A549 (cell line): ENCODE measurements at regions of chr10 and their contacts with region 1.

Region 1: GRCh38 chr10:72364239-72364777 is 9.6 kb upstream of the DNAJB12 start:
- DNase-seq: peak; percentile 84 to 93
- ATAC-seq: peak; percentile 95 to 96
- H3K4me3 ChIP-seq: peak overlapping the region; percentile 11; the same call in 1 of the 3 replicates
- H3K27ac ChIP-seq: peak overlapping the region; percentile 63 to 91
- H3K4me1 ChIP-seq: peaks cover 18% of the 10 kb centered on the region
- CTCF ChIP-seq: peak; percentile 94
- EP300 ChIP-seq: 0 out of 5 replicates have a peak, but pooled peaks of 1 of the 2 experiments have one; percentile 1
- POLR2A ChIP-seq: peak; percentile 31; the same call in 1 of the 2 replicates
- RAD21 ChIP-seq: peak; percentile 97 to 98

Region 2: DNA sequence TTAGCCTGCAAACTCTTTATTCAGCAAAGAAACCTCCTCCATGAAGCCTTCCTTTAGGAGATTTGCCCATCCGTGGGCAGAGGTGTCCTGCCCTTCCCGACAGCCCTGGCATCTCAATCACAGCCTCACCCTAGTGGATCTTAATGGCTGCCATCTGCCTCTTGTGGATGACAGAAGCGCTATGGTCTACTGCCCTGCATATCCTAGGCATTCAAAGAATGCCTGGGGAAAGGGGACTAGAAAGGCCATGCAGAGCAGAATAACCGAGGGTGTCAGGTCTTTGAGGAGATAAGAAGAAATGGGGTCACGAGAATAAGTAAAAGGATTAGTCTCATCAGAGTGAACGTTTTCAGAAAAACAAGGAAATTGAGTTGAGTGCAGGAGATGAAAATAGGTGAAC is 218.2 kb before region 1 on chr10:
- CTCF ChIA-PET with region 1: no interaction called
- POLR2A ChIA-PET with region 1: no interaction called
- DNase-seq: no peak
- ATAC-seq: peak in 1 of 2 experiments; percentile 56; a peak in 3 of 6 replicates
- H3K4me3 ChIP-seq: no peak overlapping the region
- H3K27ac ChIP-seq: no peak overlapping the region
- H3K4me1 ChIP-seq: peaks cover 9% of the 10 kb centered on the region
- CTCF ChIP-seq: no peak
- EP300 ChIP-seq: no peak
- POLR2A ChIP-seq: no peak
- RAD21 ChIP-seq: no peak

Region 3: GRCh38 chr10:72375585-72375984 is 11.3 kb after region 1 on chr10:
- CTCF ChIA-PET with region 1: interaction called, 41 read pairs
- POLR2A ChIA-PET with region 1: interaction called, 3 read pairs
- DNase-seq: peak in 1 of 2 experiments; percentile 40
- ATAC-seq: peak; percentile 74 to 90
- H3K4me3 ChIP-seq: no peak overlapping the region
- H3K27ac ChIP-seq: no peak overlapping the region
- H3K4me1 ChIP-seq: no peaks in the 10 kb centered on the region
- CTCF ChIP-seq: 0 out of 3 replicates have a peak, but pooled peaks have one; percentile 17
- EP300 ChIP-seq: no peak
- POLR2A ChIP-seq: no peak
- RAD21 ChIP-seq: peak in 1 of 2 experiments; percentile 49; a peak in 3 of 5 replicates

Region 4: DNA sequence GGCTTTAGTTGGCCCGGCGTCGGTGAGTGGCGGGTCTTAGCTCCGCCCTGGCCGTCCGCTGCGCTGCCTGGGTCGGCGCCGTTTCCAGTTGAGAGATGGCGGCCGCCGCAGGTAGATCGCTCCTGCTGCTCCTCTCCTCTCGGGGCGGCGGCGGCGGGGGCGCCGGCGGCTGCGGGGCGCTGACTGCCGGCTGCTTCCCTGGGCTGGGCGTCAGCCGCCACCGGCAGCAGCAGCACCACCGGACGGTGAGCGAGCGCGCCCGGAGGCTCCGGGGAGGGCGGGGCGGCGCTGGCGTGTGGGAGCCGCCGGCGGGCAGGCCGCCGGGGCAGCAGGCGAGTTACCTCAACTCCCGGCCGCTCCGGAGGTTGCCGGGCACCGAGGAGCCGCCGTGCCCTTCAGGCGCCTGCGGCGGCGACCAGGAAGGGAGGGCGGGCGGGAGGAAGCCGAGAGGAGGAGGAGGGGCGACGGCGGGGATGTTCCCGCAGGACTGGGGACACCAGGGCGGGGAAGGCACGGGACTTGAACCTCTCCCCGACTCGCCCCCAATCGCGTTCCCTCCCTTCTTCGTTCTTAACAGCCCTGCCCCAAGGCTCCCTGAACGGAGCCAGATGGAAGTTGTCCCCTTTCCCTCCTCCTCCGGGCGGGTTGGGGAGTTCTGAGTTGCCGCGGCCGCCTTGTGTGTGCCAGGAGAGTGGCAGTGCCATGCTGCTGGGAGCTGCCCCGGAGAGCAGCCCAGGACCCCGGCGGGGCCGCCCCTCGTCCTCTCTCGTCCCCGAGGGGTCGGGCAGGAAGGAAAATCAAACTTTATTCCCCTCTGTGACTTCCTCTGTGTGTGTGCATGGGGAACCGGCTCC is 328.0 kb after region 1 on chr10 and contains the start of gene MCU:
- CTCF ChIA-PET with region 1: interaction called, 11 read pairs
- POLR2A ChIA-PET with region 1: interaction called, 11 read pairs
- DNase-seq: peak; percentile 32 to 97
- ATAC-seq: peak; percentile 39 to 61
- H3K4me3 ChIP-seq: peak within 1 kb of the TSS; percentile 80
- H3K27ac ChIP-seq: peak within 1 kb of the TSS; percentile 96 to 99
- H3K4me1 ChIP-seq: peaks cover 72% of the 10 kb centered on the region
- CTCF ChIP-seq: no peak
- EP300 ChIP-seq: no peak
- POLR2A ChIP-seq: peak; percentile 78
- RAD21 ChIP-seq: no peak; a peak in 1 of 5 replicates
- polyA plus RNA-seq, gene MCU: 221 and 226 TPM in 2 replicates

Region 5: DNA sequence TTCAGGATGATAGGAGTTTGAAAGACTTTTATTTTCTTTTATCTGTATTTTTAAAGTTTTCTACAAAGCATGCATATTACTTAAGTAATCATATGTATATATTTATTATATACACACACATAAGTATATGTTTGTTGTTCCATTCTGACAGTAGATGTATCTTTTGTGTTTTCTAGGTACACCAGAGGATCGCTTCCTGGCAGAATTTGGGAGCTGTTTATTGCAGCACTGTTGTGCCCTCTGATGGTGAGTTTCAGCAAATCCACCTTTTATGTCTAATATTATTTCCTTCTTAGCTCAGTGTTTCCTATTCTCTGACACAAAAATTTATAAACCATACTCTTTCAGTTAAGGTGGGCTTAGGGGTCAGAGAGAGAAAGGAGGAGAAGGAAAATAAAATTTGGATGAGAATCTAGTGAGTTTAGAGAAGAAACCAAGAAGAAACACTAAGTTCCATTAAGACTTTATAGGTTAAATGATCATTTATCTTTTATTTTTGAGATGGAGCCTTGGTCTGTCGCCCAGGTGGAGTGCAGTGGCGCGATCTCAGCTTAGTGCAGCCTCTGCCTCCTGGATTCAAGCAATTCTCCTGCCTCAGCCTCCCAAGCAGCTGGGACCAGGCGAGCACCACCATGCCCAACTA is 470.0 kb after region 1 on chr10:
- CTCF ChIA-PET with region 1: interaction called, 89 read pairs
- POLR2A ChIA-PET with region 1: interaction called, 3 read pairs
- DNase-seq: peak; percentile 29 to 76
- ATAC-seq: peak; percentile 68 to 81; a peak in 4 of 6 replicates
- H3K4me3 ChIP-seq: no peak overlapping the region
- H3K27ac ChIP-seq: no peak overlapping the region
- H3K4me1 ChIP-seq: peaks cover 46% of the 10 kb centered on the region
- CTCF ChIP-seq: peak; percentile 91
- EP300 ChIP-seq: no peak
- POLR2A ChIP-seq: no peak
- RAD21 ChIP-seq: peak; percentile 94

Region 6: GRCh38 chr10:72875250-72876055 is 511.1 kb after region 1 on chr10:
- CTCF ChIA-PET with region 1: interaction called, 29 read pairs
- POLR2A ChIA-PET with region 1: no interaction called
- DNase-seq: peak; percentile 31 to 49
- ATAC-seq: peak; percentile 50 to 58; a peak in 3 of 6 replicates
- H3K4me3 ChIP-seq: no peak overlapping the region
- H3K27ac ChIP-seq: no peak overlapping the region
- H3K4me1 ChIP-seq: no peaks in the 10 kb centered on the region
- CTCF ChIP-seq: peak; percentile 75
- EP300 ChIP-seq: no peak
- POLR2A ChIP-seq: no peak
- RAD21 ChIP-seq: peak; percentile 75 to 81

Region 7: GRCh38 chr10:73060738-73061635 is 696.7 kb after region 1 on chr10:
- CTCF ChIA-PET with region 1: interaction called, 15 read pairs
- POLR2A ChIA-PET with region 1: no interaction called
- DNase-seq: peak; percentile 47 to 50
- ATAC-seq: peak; percentile 74 to 86; a peak in 5 of 6 replicates
- H3K4me3 ChIP-seq: no peak overlapping the region
- H3K27ac ChIP-seq: no peak overlapping the region
- H3K4me1 ChIP-seq: no peaks in the 10 kb centered on the region
- CTCF ChIP-seq: peak; percentile 76
- EP300 ChIP-seq: no peak
- POLR2A ChIP-seq: no peak
- RAD21 ChIP-seq: peak; percentile 70 to 75